Activated CD8-positive, alpha-beta T cell treated with anti-CD3 and anti-CD28 coated beads for 36 hours (primary cell): ENCODE measurements at regions of chr7 and their contacts with region 1.

Region 1: GRCh38 chr7:97104719-97105238 is 12.7 kb upstream of the SDHAF3 start:
- DNase-seq: peak; percentile 81
- ATAC-seq: peak; percentile 84
- H3K4me3 Mint-ChIP-seq: no peak overlapping the region
- H3K27ac Mint-ChIP-seq: no peak overlapping the region
- H3K4me1 Mint-ChIP-seq: no peaks in the 10 kb centered on the region
- H3K27me3 Mint-ChIP-seq: peaks cover 26% of the 10 kb centered on the region
- CTCF ChIP-seq: peak; percentile 63

Region 2: DNA sequence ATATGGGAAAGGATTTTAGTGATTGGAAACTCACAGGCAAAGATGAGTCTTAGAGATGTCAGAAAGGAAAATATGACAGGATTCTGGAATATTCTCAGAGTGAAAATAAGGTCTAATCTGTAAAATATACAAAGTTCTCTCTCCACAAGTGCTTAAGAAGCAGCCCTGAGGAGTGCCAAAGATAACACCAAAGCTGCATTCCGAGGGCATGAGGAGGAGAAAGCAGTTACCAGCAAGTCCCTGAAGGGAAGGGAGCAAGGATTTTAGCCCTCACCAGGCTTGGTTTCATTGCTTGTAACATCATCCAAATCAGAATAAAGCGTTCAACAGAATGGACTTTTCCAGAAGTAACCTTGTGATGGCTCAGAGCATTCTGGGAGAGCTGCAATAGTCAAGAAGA is 130.8 kb before region 1 on chr7:
- CTCF ChIA-PET with region 1: no interaction called
- POLR2A ChIA-PET with region 1: no interaction called
- intact Hi-C with region 1: no loop called
- DNase-seq: no peak
- ATAC-seq: no peak
- H3K4me3 Mint-ChIP-seq: no peak overlapping the region
- H3K27ac Mint-ChIP-seq: no peak overlapping the region
- H3K4me1 Mint-ChIP-seq: no peaks in the 10 kb centered on the region
- H3K27me3 Mint-ChIP-seq: peaks cover 34% of the 10 kb centered on the region
- CTCF ChIP-seq: no peak

Region 3: DNA sequence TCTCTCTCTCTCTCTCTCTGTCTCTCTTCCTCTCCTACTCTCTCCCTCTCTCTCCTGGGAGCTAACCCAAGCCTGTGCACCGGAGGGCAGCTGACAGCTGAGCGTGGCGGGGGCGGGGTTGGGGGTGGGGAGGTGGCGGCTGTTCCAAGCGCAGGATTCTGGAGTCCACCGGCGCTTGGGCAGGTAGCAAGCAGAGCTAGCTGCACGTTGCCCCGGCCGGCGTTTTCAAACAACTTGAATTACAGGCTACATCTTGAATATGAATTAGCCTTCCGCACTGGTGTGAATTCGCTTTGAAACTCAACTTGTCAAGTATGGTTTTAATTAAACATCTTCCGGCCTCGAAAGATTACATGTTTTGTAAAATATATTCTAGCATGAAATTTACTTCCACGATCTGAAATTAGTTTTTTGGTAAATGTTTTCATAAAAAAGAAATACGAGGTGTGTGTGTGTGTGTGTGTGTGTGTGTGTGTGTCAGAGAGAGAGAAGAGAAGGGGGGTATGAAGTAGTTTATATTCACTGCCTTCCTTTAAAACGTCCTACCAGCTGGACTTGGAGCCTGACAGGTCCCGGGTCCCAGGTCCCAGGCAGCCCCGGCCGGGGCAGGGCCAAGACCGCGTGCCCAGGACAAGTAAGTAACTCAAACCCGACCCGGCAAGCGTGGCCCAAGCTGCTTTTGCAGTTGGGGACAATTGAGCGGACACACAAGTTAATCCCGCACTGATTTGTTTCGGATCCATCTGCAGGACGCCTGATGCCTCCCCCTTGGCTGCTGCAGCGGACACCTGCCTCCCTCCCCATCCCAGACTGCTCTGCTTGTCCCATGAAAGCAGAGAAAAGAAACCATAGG is 108.4 kb before region 1 on chr7:
- CTCF ChIA-PET with region 1: no interaction called
- POLR2A ChIA-PET with region 1: no interaction called
- intact Hi-C with region 1: no loop called
- DNase-seq: no peak
- ATAC-seq: no peak
- H3K4me3 Mint-ChIP-seq: no peak overlapping the region
- H3K27ac Mint-ChIP-seq: no peak overlapping the region
- H3K4me1 Mint-ChIP-seq: peaks cover 5% of the 10 kb centered on the region
- H3K27me3 Mint-ChIP-seq: peaks cover 92% of the 10 kb centered on the region
- CTCF ChIP-seq: no peak

Region 4: DNA sequence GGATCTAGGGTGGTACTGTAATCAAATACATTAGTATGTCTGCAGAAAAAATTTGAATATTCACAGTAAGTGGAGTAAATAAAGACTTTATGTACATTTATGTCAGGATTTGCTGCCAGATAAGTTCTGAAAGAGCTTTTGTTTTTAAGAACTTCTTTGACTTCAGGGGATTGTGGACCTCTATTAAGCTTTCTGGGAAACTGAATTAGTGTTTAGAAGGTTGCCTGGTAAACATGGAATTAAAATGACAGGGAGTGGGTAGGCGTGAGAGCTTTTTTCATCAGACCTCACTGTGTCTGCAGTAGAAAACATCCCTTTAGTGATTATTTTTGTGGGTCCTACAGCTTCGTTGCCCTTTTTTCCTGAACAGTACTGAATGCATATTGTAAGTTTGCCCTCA is 28.4 kb after region 1 on chr7:
- CTCF ChIA-PET with region 1: no interaction called
- POLR2A ChIA-PET with region 1: no interaction called
- intact Hi-C with region 1: no loop called
- DNase-seq: no peak
- ATAC-seq: no peak
- H3K4me3 Mint-ChIP-seq: no peak overlapping the region
- H3K27ac Mint-ChIP-seq: no peak overlapping the region
- H3K4me1 Mint-ChIP-seq: peaks cover 21% of the 10 kb centered on the region
- H3K27me3 Mint-ChIP-seq: no peaks in the 10 kb centered on the region
- CTCF ChIP-seq: no peak

Region 5: GRCh38 chr7:97174303-97174702 is 69.5 kb after region 1 on chr7:
- CTCF ChIA-PET with region 1: interaction called, 12 read pairs
- POLR2A ChIA-PET with region 1: no interaction called
- intact Hi-C with region 1: no loop called
- DNase-seq: no peak
- ATAC-seq: no peak
- H3K4me3 Mint-ChIP-seq: no peak overlapping the region
- H3K27ac Mint-ChIP-seq: no peak overlapping the region
- H3K4me1 Mint-ChIP-seq: peaks cover 3% of the 10 kb centered on the region
- H3K27me3 Mint-ChIP-seq: no peaks in the 10 kb centered on the region
- CTCF ChIP-seq: no peak

Region 6: GRCh38 chr7:97179454-97180104 is 74.8 kb after region 1 on chr7:
- CTCF ChIA-PET with region 1: interaction called, 9 read pairs
- POLR2A ChIA-PET with region 1: no interaction called
- intact Hi-C with region 1: loop called (anchors 5 kb)
- DNase-seq: peak; percentile 51
- ATAC-seq: peak; percentile 49
- H3K4me3 Mint-ChIP-seq: no peak overlapping the region
- H3K27ac Mint-ChIP-seq: no peak overlapping the region
- H3K4me1 Mint-ChIP-seq: peaks cover 5% of the 10 kb centered on the region
- H3K27me3 Mint-ChIP-seq: no peaks in the 10 kb centered on the region
- CTCF ChIP-seq: peak; percentile 73